Endothelial cell of umbilical vein (primary cell): ENCODE measurements at regions of chr5 and their contacts with region 1.

Region 1: DNA sequence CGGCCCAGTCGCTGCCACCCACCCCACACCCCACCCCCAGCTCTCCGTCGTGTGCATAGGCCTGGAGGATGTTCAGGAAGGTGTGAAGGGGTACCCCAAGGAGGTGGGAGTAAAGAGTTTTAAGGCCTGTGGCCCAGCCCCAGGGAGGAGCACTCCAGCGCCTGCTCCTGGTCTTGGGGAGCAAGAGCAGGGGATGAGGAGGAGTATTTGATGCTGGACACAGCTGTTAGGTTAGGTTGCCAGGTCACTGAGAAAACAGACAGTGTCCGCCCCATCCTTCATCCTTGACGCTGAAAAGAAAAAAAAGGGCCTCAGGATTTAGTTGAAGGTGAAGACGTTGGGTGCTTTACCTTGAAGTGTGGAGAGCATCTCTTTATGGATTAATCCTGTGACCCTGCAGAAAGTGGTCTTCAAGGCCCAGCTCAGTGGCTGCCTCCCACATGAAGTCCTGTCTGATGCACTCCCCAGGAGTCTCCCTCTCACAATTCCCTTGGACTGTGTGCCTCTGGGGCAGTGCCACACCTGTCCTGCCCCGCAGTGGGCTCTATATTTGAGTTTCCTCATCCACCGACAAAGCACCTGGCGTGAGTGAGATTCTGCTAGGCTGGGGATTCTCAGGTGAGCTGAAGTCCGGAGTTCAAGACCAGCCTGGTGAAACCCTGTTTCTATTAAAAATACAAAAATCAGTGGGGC is 101.8 kb downstream of the SPRY4 start:
- DNase-seq: no peak
- H3K4me3 ChIP-seq: no peak overlapping the region
- H3K27ac ChIP-seq: no peak overlapping the region
- H3K4me1 ChIP-seq: peaks cover 26% of the 10 kb centered on the region
- H3K27me3 ChIP-seq: no peaks in the 10 kb centered on the region
- CTCF ChIP-seq: no peak
- POLR2A ChIP-seq: no peak

Region 2: GRCh38 chr5:142246258-142246657 is 23.2 kb after region 1 on chr5:
- CTCF ChIA-PET with region 1: no interaction called
- POLR2A ChIA-PET with region 1: no interaction called
- dilution Hi-C with region 1: no loop called
- intact Hi-C with region 1: loop called (anchors 2 kb)
- DNase-seq: peak; percentile 23
- H3K4me3 ChIP-seq: no peak overlapping the region
- H3K27ac ChIP-seq: peak overlapping the region; percentile 66
- H3K4me1 ChIP-seq: peaks cover 13% of the 10 kb centered on the region
- H3K27me3 ChIP-seq: no peaks in the 10 kb centered on the region
- CTCF ChIP-seq: no peak
- POLR2A ChIP-seq: no peak

Region 3: DNA sequence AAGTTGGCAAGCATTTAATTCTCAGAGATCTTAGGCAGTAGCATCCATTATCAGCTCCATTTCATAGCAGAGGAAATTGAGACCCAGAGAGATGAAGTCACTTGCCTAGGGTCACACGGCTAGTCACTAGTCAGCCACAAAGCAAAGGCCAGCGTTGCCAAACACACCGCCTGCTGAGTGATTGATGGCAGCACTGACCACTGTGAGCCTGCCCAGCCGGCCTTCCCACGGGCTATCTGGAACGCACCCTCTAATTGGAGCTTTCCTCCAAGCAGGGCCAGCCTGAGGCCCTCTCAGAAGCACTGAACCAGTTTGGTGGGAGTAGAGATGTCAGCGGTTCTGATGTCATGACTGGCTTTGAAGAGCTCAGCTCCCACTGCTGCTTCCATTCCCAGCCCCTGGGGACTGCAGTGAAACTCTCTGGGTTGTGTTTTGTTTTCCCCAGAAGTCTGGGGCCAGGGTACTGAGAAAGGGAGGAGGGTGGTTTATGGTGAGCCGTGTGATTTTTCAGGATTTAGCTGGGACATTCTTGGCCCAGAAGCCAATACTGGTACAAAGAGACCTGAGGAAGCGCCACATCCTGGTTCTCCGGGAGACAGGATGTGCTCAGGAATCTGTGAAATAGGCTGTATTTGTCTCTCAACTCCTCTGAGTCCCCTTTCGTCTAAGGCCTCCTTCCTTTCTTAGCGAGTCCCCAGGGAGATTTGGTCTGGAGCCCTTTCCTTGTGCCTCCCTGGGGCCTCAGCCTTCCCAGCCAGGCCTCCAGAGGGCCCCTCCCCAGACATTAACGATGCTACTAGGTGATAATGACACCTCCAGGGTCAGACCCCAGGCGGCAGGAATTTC is 57.3 kb after region 1 on chr5:
- CTCF ChIA-PET with region 1: interaction called, 3 read pairs
- POLR2A ChIA-PET with region 1: no interaction called
- dilution Hi-C with region 1: no loop called
- intact Hi-C with region 1: loop called (anchors 2 kb)
- DNase-seq: peak; percentile 70
- H3K4me3 ChIP-seq: no peak overlapping the region
- H3K27ac ChIP-seq: peak overlapping the region; percentile 75
- H3K4me1 ChIP-seq: peaks cover 15% of the 10 kb centered on the region
- H3K27me3 ChIP-seq: no peaks in the 10 kb centered on the region
- CTCF ChIP-seq: no peak
- POLR2A ChIP-seq: no peak